Ovary (tissue), 10 donors: ENCODE measurements at regions of chr6 and their contacts with region 1.

Region 1: DNA sequence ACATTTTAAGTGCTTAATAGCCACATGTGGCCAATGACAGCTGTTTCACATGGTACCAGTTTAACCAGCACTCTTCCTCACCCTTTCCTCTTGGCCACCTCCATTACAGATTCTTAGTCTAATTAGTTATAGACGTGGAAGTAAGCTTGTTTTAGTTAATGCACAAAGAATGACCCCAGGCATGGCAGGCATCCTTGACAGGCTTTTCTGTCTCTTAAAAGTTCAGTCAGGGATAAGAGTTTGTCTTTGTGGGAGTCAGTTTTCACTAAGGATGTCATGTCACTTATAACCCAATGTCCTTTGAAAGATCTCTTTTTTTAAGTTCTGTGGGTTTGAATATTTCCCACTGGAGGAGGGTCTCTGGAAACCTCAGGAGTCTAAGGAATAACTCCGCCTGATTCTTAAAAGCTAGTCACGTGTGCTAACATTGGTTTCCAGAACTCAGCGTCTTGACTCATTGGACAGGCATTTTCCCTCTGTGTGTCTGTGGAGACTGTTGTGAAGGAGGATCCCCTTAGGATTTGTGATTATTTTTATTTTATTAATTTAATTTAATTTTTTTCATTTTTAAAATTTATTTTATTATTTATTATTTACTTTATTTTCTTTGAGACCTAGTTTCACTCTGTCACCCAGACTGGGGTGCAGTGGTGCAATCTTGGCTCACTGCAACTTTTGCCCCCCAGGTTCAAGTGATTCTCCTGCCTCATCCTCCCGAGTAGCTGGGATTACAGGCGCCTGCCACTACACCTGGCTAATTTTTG is 171.4 kb downstream of the ZFAND3 start:
- DNase-seq: peak in 1 of 5 donors; percentile 59
- H3K4me3 ChIP-seq: no peak overlapping the region
- H3K27ac ChIP-seq: peak overlapping the region in 1 of 2 donors; percentile 31
- H3K4me1 ChIP-seq: peaks cover 12% of the 10 kb centered on the region
- H3K27me3 ChIP-seq: no peaks in the 10 kb centered on the region
- CTCF ChIP-seq: no peak
- EP300 ChIP-seq: no peak
- POLR2A ChIP-seq: no peak

Region 2: DNA sequence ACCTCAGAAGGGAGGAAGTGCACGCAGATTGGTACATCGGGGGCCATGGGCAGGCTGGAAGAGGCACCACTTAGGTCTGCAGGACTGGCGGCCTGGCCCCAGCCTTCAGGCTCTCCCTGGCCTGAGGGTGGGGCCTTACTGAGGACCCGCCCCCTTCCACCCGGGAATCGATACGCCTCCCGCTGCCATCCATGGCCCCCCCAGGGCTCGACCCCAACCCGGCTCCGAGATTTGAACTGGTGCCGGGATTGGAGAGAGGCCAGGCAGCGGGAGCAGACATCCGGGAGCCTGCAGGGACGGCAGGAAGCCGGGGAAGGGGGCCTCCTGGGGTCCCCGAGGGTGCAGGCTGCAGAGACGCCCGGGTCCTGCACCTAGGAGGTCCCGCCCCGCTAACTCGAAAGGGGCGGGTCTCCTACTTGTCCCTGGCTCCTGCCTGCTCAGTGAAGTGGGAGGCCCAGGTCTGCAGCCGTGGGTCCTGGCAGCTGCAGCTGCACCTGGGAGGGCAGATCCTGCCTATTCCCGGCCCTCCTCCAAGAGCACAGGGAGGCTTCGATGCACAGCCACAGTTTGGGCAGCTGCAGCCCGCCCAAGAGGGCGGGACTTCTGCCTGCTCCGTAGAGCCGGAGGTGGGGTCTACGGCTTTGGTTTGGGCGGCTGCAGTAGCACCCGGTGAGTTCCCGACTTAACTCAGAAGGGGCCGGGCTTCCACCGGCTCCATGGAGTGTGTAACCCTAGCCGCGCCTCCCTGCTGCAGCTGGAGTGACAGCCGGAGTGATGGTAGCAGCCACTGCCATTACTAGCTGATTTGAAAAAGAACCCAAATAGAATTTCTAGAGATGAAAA is 768.6 kb before region 1 on chr6:
- intact Hi-C with region 1: no loop called
- DNase-seq: peak; percentile 77 to 84 (median 81)
- H3K4me3 ChIP-seq: peak overlapping the region; percentile 66
- H3K27ac ChIP-seq: peak overlapping the region in 1 of 2 donors; percentile 19
- H3K4me1 ChIP-seq: peaks cover 4% of the 10 kb centered on the region
- H3K27me3 ChIP-seq: no peaks in the 10 kb centered on the region
- CTCF ChIP-seq: no peak
- EP300 ChIP-seq: no peak
- POLR2A ChIP-seq: no peak

Region 3: DNA sequence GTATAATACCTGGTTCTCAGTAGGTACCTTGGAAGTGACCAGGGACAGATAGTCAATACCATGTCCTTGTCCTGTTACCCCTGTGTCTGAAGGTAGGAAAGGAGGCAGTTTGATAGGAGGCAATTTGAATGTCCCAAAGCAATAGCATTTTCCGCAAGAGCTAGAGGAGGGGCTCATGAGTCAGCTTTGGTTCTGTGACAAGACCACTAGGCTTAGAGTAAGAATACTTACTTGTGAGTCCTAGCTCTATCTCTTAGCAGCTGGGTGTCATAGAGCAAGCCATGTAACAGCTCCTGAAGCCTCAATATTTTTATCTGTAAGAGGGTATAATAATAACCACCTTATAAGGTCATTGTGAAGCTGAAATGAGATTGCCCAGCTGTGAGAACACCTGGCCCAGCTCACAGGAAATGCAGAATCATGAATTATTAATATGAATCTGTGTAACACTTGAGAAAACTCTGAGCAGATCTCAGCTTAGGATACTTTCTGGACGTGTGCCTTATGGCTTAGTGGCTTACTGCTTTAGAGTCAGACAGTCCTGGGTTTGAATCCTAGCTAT is 1859.9 kb after region 1 on chr6:
- intact Hi-C with region 1: loop called in 1 of 4 experiments (anchors 5 kb)
- DNase-seq: no peak
- H3K4me3 ChIP-seq: no peak overlapping the region
- H3K27ac ChIP-seq: no peak overlapping the region
- H3K4me1 ChIP-seq: peaks cover 8% of the 10 kb centered on the region
- H3K27me3 ChIP-seq: no peaks in the 10 kb centered on the region
- CTCF ChIP-seq: no peak
- EP300 ChIP-seq: no peak
- POLR2A ChIP-seq: no peak